ENCODE measurements at regions of chr7 and their contacts with region 1.

Region 1: DNA sequence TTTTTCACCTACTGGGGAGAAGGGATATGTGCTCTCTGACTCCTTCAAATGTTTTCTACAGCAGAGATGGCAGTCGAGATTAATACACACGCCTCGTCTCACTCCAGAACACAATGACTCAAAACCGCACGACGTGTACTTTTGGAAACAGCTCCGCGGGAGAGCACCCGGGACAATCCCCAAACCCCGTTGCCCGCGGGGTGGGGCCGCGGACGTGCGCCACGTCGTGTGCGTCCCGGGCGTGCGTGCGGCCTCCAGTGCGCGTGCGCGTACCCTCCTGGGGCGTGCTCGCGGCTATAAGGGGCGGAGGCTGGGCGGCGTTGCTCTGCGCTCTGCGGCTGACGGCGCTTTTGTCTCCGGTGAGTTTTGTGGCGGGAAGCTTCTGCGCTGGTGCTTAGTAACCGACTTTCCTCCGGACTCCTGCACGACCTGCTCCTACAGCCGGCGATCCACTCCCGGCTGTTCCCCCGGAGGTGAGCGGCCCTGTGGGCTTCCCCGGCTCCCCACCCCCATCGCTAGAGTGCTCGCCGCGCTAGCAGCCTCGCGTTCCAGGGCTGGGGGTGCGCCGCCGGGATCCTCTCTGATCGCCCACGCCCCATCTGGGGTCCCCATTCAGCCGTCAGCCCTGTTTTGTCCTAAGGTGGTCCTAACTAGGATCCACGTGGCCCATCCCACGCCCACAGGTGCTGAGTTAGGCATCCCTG is at the start of gene HILPDA:
- DNase-seq: peak; percentile 79 to 97
- H3K4me3 ChIP-seq: peak within 1 kb of the TSS; percentile 72 to 84
- H3K27ac ChIP-seq: peak within 1 kb of the TSS; percentile 90 to 96
- H3K4me1 ChIP-seq: peaks cover 4 to 18% of the 10 kb centered on the region in 2 donors
- H3K27me3 ChIP-seq: no peaks in the 10 kb centered on the region
- CTCF ChIP-seq: no peak
- total RNA-seq, gene HILPDA: 19.3 TPM

Region 2: DNA sequence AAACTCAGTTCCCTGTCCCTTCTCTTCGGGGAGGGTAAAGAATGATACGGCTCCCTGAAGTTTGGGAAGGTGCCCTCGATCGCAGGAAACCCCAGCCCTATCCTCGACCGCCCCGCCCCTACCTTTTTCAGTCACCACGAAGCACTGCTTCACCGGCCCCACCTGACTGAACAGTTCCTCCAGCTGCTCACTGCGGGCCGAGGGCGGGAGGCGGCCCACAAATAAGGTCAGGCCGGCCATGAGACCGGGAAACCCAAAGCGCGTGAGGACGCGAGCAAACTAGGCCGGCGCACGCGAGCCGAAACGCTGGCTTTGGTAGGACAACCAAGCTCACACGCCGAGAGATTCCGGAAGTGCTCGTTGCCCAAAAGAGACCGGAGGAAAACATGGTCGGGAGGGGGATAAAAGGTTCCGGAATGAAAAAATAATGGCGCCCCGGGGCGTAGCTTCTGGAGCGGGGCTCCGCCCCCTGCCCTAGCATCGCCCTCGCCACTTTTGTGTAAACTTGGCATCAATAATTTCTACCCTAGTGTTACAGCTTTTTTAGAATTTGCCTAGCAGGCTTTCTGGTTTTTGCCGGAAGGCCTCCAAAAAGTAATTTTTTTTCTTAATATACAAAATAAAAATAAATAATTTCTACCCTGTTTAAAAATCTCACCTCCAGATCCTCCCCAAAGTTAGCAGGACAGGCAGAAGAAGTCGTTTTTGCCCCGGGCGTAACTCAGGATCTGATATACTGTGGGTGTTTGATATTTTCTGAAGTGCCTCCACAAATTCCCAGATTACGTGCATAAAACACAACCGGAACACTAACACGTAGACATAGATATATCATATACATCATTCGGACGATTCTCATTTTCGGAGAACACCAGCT is 111.9 kb before region 1 on chr7 and contains the start of gene RBM28:
- intact Hi-C with region 1: loop called (anchors 5 kb)
- DNase-seq: peak; percentile 59 to 92
- H3K4me3 ChIP-seq: peak within 1 kb of the TSS; percentile 61 to 76
- H3K27ac ChIP-seq: peak within 1 kb of the TSS; percentile 66 to 69
- H3K4me1 ChIP-seq: peaks cover 4 to 13% of the 10 kb centered on the region in 2 donors
- H3K27me3 ChIP-seq: no peaks in the 10 kb centered on the region
- CTCF ChIP-seq: no peak
- total RNA-seq, gene RBM28: 23.8 TPM

Region 3: GRCh38 chr7:128398016-128398840 is 57.5 kb before region 1 on chr7:
- intact Hi-C with region 1: loop called (anchors 2 kb)
- DNase-seq: no peak
- H3K4me3 ChIP-seq: no peak overlapping the region
- H3K27ac ChIP-seq: no peak overlapping the region
- H3K4me1 ChIP-seq: no peaks in the 10 kb centered on the region
- H3K27me3 ChIP-seq: no peaks in the 10 kb centered on the region
- CTCF ChIP-seq: peak; percentile 83 to 91 (median 89)

Region 4: GRCh38 chr7:128409596-128410160 is 46.0 kb before region 1 on chr7 and contains the start of gene IMPDH1:
- intact Hi-C with region 1: loop called (anchors 1 kb)
- DNase-seq: peak; percentile 60 to 94
- H3K4me3 ChIP-seq: peak within 1 kb of the TSS; percentile 62 to 94
- H3K27ac ChIP-seq: peak within 1 kb of the TSS; percentile 87 to 92
- H3K4me1 ChIP-seq: peaks cover 6 to 22% of the 10 kb centered on the region in 2 donors
- H3K27me3 ChIP-seq: no peaks in the 10 kb centered on the region
- CTCF ChIP-seq: no peak
- total RNA-seq, gene IMPDH1: 148 TPM

Region 5: GRCh38 chr7:128425850-128426249 is 29.9 kb before region 1 on chr7:
- intact Hi-C with region 1: loop called (anchors 1 kb)
- DNase-seq: peak in 1 of 2 donors; percentile 80
- H3K4me3 ChIP-seq: no peak overlapping the region
- H3K27ac ChIP-seq: no peak overlapping the region
- H3K4me1 ChIP-seq: no peaks in the 10 kb centered on the region
- H3K27me3 ChIP-seq: no peaks in the 10 kb centered on the region
- CTCF ChIP-seq: peak; percentile 65 to 86 (median 72)